GM13977 (cell line): ENCODE measurements at regions of chr6 and their contacts with region 1.

Region 1: GRCh38 chr6:100116411-100117194 is 122.6 kb upstream of the MCHR2 start:
- DNase-seq: peak; percentile 21
- CTCF ChIP-seq: peak; percentile 64

Region 2: GRCh38 chr6:100370265-100370664 is 253.7 kb after region 1 on chr6:
- in situ Hi-C with region 1: no loop called
- DNase-seq: no peak
- CTCF ChIP-seq: no peak

Region 3: GRCh38 chr6:100664274-100665040 is 547.9 kb after region 1 on chr6:
- in situ Hi-C with region 1: loop called (anchors 25 kb)
- DNase-seq: no peak
- CTCF ChIP-seq: peak; percentile 51